Transverse colon (tissue), 4 donors: ENCODE measurements at regions of chr17 and their contacts with region 1.

Region 1: DNA sequence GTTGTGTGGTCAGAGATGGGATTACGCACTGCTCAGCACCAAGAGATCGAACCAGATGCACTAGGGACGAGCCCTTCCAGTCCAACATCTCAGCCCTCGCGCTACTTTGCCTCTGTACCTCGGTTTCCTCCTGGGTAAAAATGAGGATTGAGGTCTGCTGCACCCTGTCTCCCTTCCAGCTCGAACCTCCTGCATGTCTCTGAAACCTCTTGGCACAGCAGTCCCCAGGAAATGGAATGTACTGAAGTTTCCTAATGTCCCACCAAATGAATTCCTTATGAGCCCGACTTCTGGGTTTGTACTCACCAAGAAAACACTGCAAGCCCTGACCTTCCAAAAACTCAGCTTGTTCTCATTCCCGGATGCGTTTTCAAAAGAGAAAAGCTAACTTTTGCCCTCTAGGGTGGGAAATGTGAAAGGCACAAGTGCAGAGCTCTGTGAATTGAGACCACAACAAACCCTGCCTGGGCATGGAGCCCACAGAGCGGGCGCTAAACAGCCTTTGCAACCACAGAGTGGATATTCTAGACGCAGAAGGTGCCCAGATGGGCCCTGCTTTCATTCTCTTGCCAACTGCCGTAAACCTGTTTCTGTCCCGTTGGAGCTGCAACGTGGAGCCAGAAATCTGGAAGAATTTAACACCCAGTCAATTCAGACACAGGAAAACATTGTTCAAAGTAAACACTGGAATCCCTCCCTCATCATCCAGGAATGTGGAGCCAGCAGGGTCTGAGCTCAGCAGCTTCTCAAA is 10.3 kb downstream of the CDRT4 start:
- DNase-seq: peak; percentile 46
- H3K4me3 ChIP-seq: peak overlapping the region in 1 of 4 donors; percentile 2
- H3K27ac ChIP-seq: peak overlapping the region; percentile 67 to 86 (median 68)
- H3K4me1 ChIP-seq: peaks cover 5 to 29% (median 11%) of the 10 kb centered on the region in 4 donors
- H3K27me3 ChIP-seq: no peaks in the 10 kb centered on the region
- CTCF ChIP-seq: peak in 4 of 5 experiments; percentile 20 to 47 (median 26)
- EP300 ChIP-seq: no peak
- POLR2A ChIP-seq: no peak

Region 2: GRCh38 chr17:15307710-15308111 is 149.4 kb before region 1 on chr17:
- in situ Hi-C with region 1: no loop called
- intact Hi-C with region 1: loop called (anchors 5 kb)
- DNase-seq: peak; percentile 41
- H3K4me3 ChIP-seq: no peak overlapping the region
- H3K27ac ChIP-seq: peak overlapping the region; percentile 40 to 55 (median 53)
- H3K4me1 ChIP-seq: peaks cover 6 to 11% (median 8%) of the 10 kb centered on the region in 4 donors
- H3K27me3 ChIP-seq: no peaks in the 10 kb centered on the region
- CTCF ChIP-seq: no peak
- EP300 ChIP-seq: peak; percentile 73
- POLR2A ChIP-seq: no peak

Region 3: GRCh38 chr17:15502369-15503112 is 45.4 kb after region 1 on chr17:
- in situ Hi-C with region 1: no loop called
- intact Hi-C with region 1: loop called (anchors 1 kb)
- DNase-seq: peak; percentile 85
- H3K4me3 ChIP-seq: peak overlapping the region in 3 of 4 donors; percentile 5 to 38 (median 9)
- H3K27ac ChIP-seq: peak overlapping the region; percentile 62 to 85 (median 76)
- H3K4me1 ChIP-seq: peaks cover 0 to 12% (median 2%) of the 10 kb centered on the region in 4 donors
- H3K27me3 ChIP-seq: no peaks in the 10 kb centered on the region
- CTCF ChIP-seq: peak; percentile 79 to 91 (median 83)
- EP300 ChIP-seq: no peak
- POLR2A ChIP-seq: peak; percentile 14

Region 4: DNA sequence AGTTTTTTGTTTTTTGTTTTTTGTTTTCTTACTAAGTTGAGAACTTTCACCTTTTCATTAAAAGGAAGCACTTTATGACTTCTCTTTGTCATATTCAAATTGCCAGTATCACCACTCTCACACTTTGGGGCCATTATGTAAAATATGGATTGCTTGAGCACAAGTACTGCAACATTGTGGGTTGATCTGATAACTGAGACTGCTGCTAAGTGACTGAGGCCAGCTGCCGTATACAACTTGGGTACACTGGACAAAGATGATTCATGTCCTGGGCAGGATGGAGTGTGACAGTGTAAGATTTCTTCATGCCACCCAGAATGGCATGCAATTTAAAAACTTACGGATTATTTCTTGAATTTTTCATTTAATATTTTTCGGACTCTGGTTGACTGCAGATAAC is 550.3 kb after region 1 on chr17:
- in situ Hi-C with region 1: no loop called
- intact Hi-C with region 1: no loop called
- DNase-seq: no peak
- H3K4me3 ChIP-seq: no peak overlapping the region
- H3K27ac ChIP-seq: no peak overlapping the region
- H3K4me1 ChIP-seq: peaks cover 0 to 18% (median 9%) of the 10 kb centered on the region in 4 donors
- H3K27me3 ChIP-seq: no peaks in the 10 kb centered on the region
- CTCF ChIP-seq: no peak
- EP300 ChIP-seq: no peak
- POLR2A ChIP-seq: no peak